ENCODE measurements at regions of chr21 and their contacts with region 1.

Region 1: GRCh38 chr21:42009831-42010523 is at the start of gene ZBTB21:
- DNase-seq: peak; percentile 99
- ATAC-seq: peak; percentile 98
- total RNA-seq, gene ZBTB21: 6.1 TPM

Region 2: GRCh38 chr21:41953831-41954653 is 55.9 kb before region 1 on chr21 and contains the start of gene C2CD2:
- intact Hi-C with region 1: loop called (anchors 2 kb)
- DNase-seq: peak; percentile 84
- ATAC-seq: peak; percentile 84
- total RNA-seq, gene C2CD2: 7.0 TPM

Region 3: DNA sequence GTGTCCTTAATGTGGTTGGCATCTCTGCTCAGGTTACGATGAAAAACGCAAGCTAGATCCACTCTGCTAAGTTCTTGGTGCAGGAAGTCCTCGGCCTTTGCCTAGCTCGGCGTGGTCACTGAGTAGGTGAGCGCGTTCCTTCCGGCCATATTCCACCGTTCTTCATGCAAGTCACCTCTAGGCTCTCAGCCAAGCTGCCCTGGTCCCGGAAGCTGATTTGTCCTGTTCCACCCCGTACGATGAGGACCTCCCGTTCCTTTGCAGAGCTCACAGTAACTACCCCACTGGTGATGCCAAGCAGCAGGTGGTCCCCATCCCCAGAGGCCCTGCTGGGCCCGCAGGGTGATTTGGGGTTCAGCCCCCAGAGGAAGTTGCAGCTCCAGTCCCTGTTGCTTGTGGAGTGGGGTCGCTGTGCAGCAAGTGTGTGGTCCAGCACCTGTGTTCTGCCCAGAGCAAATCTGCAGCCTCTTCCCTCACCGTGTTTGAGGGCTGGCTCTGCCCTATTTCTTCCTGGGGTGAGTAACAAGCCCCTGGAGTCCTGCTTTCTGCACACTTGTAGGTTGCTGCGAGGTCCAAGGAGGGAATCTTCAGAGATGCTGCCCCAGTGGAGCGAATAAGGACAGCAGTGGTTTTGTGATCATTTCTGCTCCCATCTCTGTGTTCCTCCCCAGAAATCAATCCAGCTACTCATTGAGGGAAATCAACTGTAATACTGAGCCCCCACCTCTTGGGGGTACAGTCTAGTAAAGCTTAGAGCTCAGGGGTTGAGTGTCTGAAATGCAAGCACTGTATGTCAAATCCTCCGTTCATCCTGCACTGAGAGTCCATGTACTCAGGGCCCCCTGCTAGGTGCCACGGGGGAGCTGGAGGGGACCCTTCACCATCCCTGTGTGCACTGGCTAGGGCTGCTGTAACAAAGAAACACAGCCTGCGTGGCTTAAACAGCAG is 63.4 kb after region 1 on chr21:
- intact Hi-C with region 1: no loop called
- DNase-seq: peak; percentile 45
- ATAC-seq: no peak

Region 4: DNA sequence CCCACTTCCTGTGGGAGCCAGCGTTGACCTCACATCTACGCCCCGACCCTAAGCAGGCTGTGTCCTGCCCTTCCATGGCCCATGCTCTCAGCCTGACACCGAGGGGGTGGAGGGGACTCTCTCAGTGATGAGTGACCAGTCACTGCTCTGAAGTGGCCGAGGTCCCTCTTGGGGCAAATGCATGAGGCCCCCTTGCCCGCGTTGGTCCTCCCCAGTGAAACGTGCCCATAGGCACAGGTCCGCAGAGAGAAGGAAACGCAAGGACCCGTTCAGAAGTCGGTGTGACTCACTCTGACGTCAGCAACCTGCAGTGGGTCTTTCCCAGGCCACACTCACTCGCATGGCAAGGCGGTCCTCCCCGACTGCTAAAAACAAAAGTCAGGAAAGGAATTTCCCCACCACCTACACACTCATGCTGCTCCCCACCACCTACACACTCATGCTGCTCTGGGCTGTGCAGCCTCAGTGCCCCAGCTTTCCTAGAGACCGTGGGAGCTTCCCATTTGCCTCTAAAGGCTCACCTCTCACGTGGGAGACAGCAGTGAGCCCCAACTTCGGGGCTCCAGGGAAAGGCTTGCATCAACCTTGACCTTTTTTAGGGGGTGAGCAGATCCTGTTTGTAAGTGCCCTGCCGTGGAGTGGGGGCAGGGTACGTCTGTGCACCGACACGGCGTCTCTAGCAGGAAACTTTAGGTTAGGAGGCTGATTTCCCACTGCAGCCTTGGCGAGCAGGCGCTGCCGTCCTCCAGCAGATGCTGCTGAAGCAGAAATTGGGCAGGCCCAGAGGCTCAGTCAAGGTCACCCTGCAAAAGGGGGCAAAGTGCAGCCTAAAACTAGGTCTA is 405.2 kb after region 1 on chr21:
- intact Hi-C with region 1: no loop called
- DNase-seq: no peak
- ATAC-seq: no peak

Measured in Right ventricle myocardium inferior (tissue), 1 donor.